Activated B cell treated with CpG ODN at 0.5 μM for 24 hours (primary cell): ENCODE measurements at regions of chr7 and their contacts with region 1.

Region 1: GRCh38 chr7:129224251-129225205 is at the start of gene AHCYL2:
- DNase-seq: peak; percentile 95
- ATAC-seq: peak; percentile 88
- H3K4me3 Mint-ChIP-seq: peak within 1 kb of the TSS; percentile 95
- H3K27ac Mint-ChIP-seq: peak within 1 kb of the TSS; percentile 97
- H3K4me1 Mint-ChIP-seq: peaks cover 33% of the 10 kb centered on the region
- H3K27me3 Mint-ChIP-seq: no peaks in the 10 kb centered on the region
- CTCF ChIP-seq: no peak
- total RNA-seq, gene AHCYL2: 10.9 and 11.6 TPM in 2 replicates

Region 2: GRCh38 chr7:128409596-128410160 is 814.9 kb before region 1 on chr7 and contains the start of gene IMPDH1:
- CTCF ChIA-PET with region 1: no interaction called
- POLR2A ChIA-PET with region 1: no interaction called
- intact Hi-C with region 1: loop called (anchors 5 kb)
- DNase-seq: peak; percentile 91
- ATAC-seq: peak; percentile 76
- H3K4me3 Mint-ChIP-seq: peak within 1 kb of the TSS; percentile 91
- H3K27ac Mint-ChIP-seq: peak within 1 kb of the TSS; percentile 72
- H3K4me1 Mint-ChIP-seq: peaks cover 40% of the 10 kb centered on the region
- H3K27me3 Mint-ChIP-seq: no peaks in the 10 kb centered on the region
- CTCF ChIP-seq: no peak
- total RNA-seq, gene IMPDH1: 42.3 and 45.8 TPM in 2 replicates

Region 3: DNA sequence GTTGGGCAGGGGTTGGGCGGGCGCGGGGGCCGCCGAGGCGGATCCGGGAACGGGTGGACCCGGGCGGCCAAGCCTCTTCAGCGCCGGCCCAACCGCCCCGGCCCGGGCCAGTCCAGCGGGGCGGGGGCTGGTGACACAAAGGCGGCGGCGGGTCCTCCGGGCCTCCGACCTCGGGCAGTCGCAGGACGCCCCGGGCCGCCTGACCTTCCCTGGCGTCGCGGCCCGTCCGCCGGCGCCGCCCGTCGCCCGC is 693.7 kb before region 1 on chr7:
- CTCF ChIA-PET with region 1: no interaction called
- POLR2A ChIA-PET with region 1: no interaction called
- intact Hi-C with region 1: loop called (anchors 1 kb)
- DNase-seq: no peak
- ATAC-seq: no peak
- H3K4me3 Mint-ChIP-seq: no peak overlapping the region
- H3K27ac Mint-ChIP-seq: no peak overlapping the region
- H3K4me1 Mint-ChIP-seq: peaks cover 32% of the 10 kb centered on the region
- H3K27me3 Mint-ChIP-seq: no peaks in the 10 kb centered on the region
- CTCF ChIP-seq: no peak

Region 4: GRCh38 chr7:129054438-129055293 is 169.9 kb before region 1 on chr7 and contains the start of gene TNPO3:
- CTCF ChIA-PET with region 1: no interaction called
- POLR2A ChIA-PET with region 1: interaction called, 4 read pairs
- intact Hi-C with region 1: loop called (anchors 1 kb)
- DNase-seq: peak; percentile 85
- ATAC-seq: peak; percentile 84
- H3K4me3 Mint-ChIP-seq: peak within 1 kb of the TSS; percentile 99
- H3K27ac Mint-ChIP-seq: peak within 1 kb of the TSS; percentile 99
- H3K4me1 Mint-ChIP-seq: peaks cover 47% of the 10 kb centered on the region
- H3K27me3 Mint-ChIP-seq: no peaks in the 10 kb centered on the region
- CTCF ChIP-seq: no peak
- total RNA-seq, gene TNPO3: 50.8 and 56.2 TPM in 2 replicates

Region 5: GRCh38 chr7:129247087-129247486 is 22.6 kb after region 1 on chr7:
- CTCF ChIA-PET with region 1: no interaction called
- POLR2A ChIA-PET with region 1: no interaction called
- intact Hi-C with region 1: loop called (anchors 2 kb)
- DNase-seq: no peak
- ATAC-seq: no peak
- H3K4me3 Mint-ChIP-seq: no peak overlapping the region
- H3K27ac Mint-ChIP-seq: no peak overlapping the region
- H3K4me1 Mint-ChIP-seq: peaks cover 5% of the 10 kb centered on the region
- H3K27me3 Mint-ChIP-seq: no peaks in the 10 kb centered on the region
- CTCF ChIP-seq: no peak

Region 6: GRCh38 chr7:129611246-129612111 is 387.0 kb after region 1 on chr7 and contains the start of gene NRF1:
- CTCF ChIA-PET with region 1: no interaction called
- POLR2A ChIA-PET with region 1: interaction called, 4 read pairs
- intact Hi-C with region 1: loop called (anchors 10 kb)
- DNase-seq: peak; percentile 95
- ATAC-seq: peak; percentile 89
- H3K4me3 Mint-ChIP-seq: peak within 1 kb of the TSS; percentile 91
- H3K27ac Mint-ChIP-seq: peak within 1 kb of the TSS; percentile 92
- H3K4me1 Mint-ChIP-seq: peaks cover 58% of the 10 kb centered on the region
- H3K27me3 Mint-ChIP-seq: no peaks in the 10 kb centered on the region
- CTCF ChIP-seq: no peak
- total RNA-seq, gene NRF1: 27.4 and 29.8 TPM in 2 replicates